ENCODE measurements at regions of chr19 and their contacts with region 1.

Region 1: DNA sequence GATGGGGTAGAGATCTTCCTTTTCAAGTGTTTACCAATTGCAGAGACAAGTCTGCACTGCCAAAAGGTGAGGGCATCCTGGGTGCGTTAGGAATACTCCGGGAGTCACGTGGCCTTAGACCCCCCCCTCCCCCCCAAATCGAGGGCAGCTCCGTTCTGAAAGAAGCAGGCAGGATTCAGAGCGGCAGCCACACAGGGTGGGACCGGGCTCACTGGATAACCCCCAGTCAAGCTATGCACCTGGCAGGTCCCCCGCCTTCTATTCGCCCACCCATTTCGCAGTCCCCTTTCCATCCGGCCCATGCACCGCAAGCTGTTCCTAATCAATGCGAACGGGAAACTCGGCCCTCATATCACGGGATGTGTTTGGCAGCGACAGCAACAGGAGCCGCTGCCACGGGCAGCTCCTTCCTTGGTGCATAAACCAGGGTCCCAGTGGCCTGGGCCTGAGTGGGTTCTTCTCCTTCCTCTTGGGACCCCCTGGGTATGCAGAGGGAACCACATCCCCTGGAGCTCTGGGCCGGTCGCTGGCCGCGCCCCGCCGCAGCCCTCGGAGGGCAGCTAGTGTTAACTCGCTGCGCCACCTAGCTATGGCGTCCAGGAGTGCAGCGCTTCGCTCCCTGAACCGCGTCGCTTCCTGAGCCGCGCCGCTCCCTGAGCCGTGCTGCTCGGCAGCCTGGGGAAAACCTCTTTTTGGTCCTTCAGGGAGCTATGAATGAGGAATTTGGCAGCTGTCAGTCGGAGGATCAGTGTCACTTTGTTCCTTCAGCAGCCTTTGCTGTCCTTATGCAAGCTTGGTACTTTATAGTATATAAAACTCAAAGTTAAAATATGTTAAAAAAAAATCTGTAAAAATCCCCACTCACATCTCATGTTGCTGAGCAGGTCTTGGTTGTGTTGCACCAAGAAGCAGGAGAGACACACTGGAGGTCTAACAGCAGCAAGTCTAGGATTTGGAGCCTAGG is 41.4 kb downstream of the LYL1 start:
- DNase-seq: no peak
- H3K4me3 ChIP-seq: no peak overlapping the region
- H3K27me3 ChIP-seq: no peaks in the 10 kb centered on the region
- CTCF ChIP-seq: peak; percentile 98

Region 2: GRCh38 chr19:12965017-12965811 is 96.0 kb before region 1 on chr19:
- CTCF ChIA-PET with region 1: interaction called, 16 read pairs
- POLR2A ChIA-PET with region 1: no interaction called
- DNase-seq: no peak
- H3K4me3 ChIP-seq: peak overlapping the region; percentile 38
- H3K27me3 ChIP-seq: no peaks in the 10 kb centered on the region
- CTCF ChIP-seq: peak; percentile 84

Region 3: DNA sequence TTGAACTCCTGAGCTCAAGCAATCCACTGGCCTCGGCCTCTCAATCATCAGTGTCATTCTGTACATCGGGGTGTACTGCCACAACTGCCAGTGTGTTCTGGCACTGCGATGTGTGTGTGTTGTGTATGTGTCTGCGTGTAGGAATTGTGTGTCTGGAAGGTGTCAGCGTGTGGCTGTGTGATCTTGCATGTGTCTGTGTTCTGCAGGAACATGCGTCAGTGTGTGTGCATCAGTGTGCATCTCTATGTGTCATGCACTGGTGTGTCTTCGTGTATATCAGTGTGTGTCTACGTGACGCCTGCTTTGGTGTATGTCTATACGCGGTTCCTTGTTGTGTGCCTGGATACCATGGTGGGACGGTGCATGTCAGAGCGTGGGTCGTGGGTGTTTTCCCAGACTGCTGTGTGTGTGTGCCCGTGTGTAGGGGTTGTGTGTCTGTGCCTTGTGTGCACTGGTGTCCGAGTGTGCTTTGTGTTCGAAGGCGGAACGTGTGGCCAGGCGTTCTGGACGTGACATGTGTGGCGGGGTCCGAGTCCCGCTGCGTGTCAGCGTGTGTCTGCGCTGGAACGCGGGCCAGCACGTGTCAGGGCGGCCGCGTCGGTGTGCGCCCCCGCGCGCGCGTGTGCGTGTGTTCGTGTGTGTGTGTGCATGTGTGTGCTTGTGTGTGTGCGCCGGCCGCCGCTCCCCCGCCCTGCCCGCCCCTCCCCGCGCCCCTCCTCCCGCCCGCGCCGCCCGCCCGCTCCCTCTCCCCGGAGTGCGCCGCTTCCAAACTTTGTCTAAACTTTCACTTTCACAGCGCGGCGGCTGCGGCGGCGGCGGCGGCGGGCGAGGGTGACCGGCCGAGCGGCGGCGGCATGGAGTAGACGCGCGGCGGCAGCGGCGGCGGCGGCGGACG is 66.3 kb before region 1 on chr19 and contains the start of gene NFIX:
- CTCF ChIA-PET with region 1: interaction called, 10 read pairs
- POLR2A ChIA-PET with region 1: interaction called, 3 read pairs
- DNase-seq: no peak
- H3K4me3 ChIP-seq: peak within 1 kb of the TSS; percentile 79
- H3K27me3 ChIP-seq: no peaks in the 10 kb centered on the region
- CTCF ChIP-seq: no peak
- polyA plus RNA-seq, gene NFIX: 12.8 and 29.4 TPM in 2 replicates

Region 4: DNA sequence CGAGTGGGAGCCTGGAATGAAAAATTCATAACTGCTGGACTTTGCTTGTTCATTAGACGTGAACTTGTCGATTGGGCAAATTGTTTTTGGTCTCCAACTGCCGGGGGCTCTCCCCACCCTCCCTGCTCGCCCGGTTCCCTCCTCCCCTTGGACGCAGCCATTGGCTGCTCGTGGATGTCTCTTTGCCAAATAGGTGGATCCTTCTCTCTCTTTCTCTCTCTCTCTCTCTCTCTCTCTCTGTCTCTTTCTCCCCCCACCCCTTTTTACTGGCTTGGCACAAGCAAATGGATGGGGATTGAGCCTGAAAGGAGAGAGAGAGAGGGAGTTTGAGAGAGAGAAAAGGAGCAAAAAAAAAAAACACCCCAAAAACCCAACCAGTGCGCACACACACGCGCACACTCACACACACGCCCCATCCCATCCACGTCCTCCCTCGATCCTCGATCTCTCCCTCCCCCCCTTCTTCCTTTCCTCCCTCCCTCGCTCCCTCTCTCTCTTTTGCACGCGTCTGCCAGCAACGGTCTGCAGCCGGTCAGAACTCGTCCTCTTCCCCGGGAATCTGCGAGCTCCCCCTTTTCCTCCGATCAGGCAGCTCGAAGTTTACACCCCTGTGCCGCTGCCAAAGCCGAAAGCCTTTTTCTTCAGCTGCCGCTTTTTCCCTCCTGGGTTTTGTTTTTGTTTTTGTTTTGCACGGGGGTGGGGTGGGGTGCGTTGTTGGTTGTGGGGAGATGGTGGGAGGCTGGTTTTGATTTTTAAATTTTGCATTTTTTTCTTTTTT is 38.2 kb before region 1 on chr19:
- CTCF ChIA-PET with region 1: interaction called, 358 read pairs
- POLR2A ChIA-PET with region 1: interaction called, 5 read pairs
- DNase-seq: peak; percentile 89
- H3K4me3 ChIP-seq: peak overlapping the region; percentile 43
- H3K27me3 ChIP-seq: no peaks in the 10 kb centered on the region
- CTCF ChIP-seq: no peak

Region 5: GRCh38 chr19:13044231-13044836 is 16.9 kb before region 1 on chr19:
- CTCF ChIA-PET with region 1: interaction called, 28 read pairs
- POLR2A ChIA-PET with region 1: no interaction called
- DNase-seq: no peak
- H3K4me3 ChIP-seq: no peak overlapping the region
- H3K27me3 ChIP-seq: no peaks in the 10 kb centered on the region
- CTCF ChIP-seq: no peak

Region 6: DNA sequence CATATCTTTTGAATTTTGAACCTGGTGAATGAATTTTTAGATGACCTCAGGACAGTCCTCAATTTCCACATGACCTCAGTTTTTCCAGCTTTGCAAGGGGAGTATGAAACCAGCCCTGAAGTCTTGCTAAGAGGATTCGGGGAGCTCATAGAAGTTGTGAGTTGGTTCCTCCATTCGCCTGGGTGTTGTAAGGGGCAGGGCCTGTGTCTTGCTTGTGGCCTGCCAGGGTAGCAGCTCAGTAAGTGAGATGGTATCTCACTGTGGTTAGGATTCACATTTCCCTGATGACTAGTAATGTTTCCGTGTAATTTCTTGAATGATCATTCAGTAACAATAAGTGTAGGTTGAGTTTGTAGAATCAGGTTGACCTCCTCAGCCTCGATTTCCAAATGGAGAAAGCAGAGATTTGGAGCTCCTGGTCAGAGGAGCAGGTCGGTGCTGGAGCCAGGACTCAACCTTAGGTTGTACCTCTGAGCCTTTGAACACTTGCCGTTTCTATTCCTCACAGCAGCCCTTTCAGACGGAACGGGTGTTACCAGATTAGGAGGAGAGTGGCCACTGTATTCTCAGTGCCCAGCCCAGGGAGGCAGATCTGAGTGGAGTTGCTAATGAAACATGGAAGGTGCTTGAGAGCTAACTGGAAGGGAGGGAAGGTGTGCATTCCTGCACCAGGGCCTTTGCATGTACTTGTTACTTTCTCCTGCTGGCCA is 71.4 kb after region 1 on chr19:
- CTCF ChIA-PET with region 1: no interaction called
- POLR2A ChIA-PET with region 1: no interaction called
- DNase-seq: no peak
- H3K4me3 ChIP-seq: no peak overlapping the region
- H3K27me3 ChIP-seq: no peaks in the 10 kb centered on the region
- CTCF ChIP-seq: no peak

Measured in BJ (cell line).